ENCODE measurements at regions of chr20 and their contacts with region 1.

Region 1: DNA sequence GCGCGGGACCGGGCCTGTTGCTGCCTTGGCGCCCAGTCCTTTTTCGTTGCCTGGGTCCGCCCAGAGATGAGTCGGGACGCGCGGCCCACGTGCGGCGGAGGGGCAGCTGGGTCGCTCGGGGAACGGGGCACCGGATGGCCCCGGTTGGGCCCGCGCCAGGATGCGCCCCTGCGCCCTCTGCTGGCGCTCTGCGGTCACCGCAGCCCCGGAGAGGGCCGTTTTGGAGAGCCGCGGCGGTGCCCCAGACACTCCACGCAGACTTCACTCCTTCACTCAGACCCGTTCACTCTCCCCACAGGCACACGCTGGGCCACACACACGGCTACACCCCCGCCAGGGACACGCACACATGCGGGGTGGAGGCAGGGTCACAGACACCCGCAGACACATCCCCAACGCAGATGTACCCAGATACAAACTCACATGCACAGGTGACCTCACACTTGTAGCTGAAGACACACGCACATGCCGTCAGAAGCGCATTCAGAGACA is 38.8 kb downstream of the SRC start:
- DNase-seq: peak; percentile 73 to 81 (median 80)
- H3K4me3 ChIP-seq: peak overlapping the region; percentile 20 to 68 (median 24)
- H3K4me3 Mint-ChIP-seq: peak overlapping the region; percentile 66 to 84
- H3K27ac ChIP-seq: peak overlapping the region in 1 of 2 donors; percentile 78
- H3K27ac Mint-ChIP-seq: peak overlapping the region in 5 of 7 donors; percentile 51 to 89 (median 72)
- H3K4me1 ChIP-seq: peaks cover 35 to 44% of the 10 kb centered on the region in 2 donors
- H3K4me1 Mint-ChIP-seq: peaks cover 40% of the 10 kb centered on the region
- H3K27me3 ChIP-seq: no peaks in the 10 kb centered on the region
- H3K27me3 Mint-ChIP-seq: peaks cover 9 to 18% (median 12%) of the 10 kb centered on the region in 3 donors
- CTCF ChIP-seq: peak; percentile 93

Region 2: GRCh38 chr20:37192137-37192854 is 192.4 kb before region 1 on chr20:
- intact Hi-C with region 1: loop called in 1 of 2 experiments (anchors 2 kb)
- DNase-seq: peak; percentile 38 to 62 (median 59)
- H3K4me3 ChIP-seq: no peak overlapping the region
- H3K4me3 Mint-ChIP-seq: no peak overlapping the region
- H3K27ac ChIP-seq: peak overlapping the region in 1 of 2 donors; percentile 31
- H3K27ac Mint-ChIP-seq: peak overlapping the region in 2 of 7 donors; percentile 22 to 63
- H3K4me1 ChIP-seq: no peaks in the 10 kb centered on the region
- H3K4me1 Mint-ChIP-seq: peaks cover 36% of the 10 kb centered on the region
- H3K27me3 ChIP-seq: no peaks in the 10 kb centered on the region
- H3K27me3 Mint-ChIP-seq: no peaks in the 10 kb centered on the region
- CTCF ChIP-seq: peak; percentile 96

Region 3: GRCh38 chr20:37265152-37265551 is 119.6 kb before region 1 on chr20:
- intact Hi-C with region 1: loop called (anchors 1 to 2 kb)
- DNase-seq: peak; percentile 84 to 91 (median 90)
- H3K4me3 ChIP-seq: no peak overlapping the region
- H3K4me3 Mint-ChIP-seq: no peak overlapping the region
- H3K27ac ChIP-seq: peak overlapping the region; percentile 53 to 81
- H3K27ac Mint-ChIP-seq: peak overlapping the region; percentile 37 to 89 (median 78)
- H3K4me1 ChIP-seq: peaks cover 16% of the 10 kb centered on the region in 2 donors
- H3K4me1 Mint-ChIP-seq: peaks cover 17% of the 10 kb centered on the region
- H3K27me3 ChIP-seq: no peaks in the 10 kb centered on the region
- H3K27me3 Mint-ChIP-seq: peaks cover 1 to 3% (median 2%) of the 10 kb centered on the region in 3 donors
- CTCF ChIP-seq: no peak

Region 4: DNA sequence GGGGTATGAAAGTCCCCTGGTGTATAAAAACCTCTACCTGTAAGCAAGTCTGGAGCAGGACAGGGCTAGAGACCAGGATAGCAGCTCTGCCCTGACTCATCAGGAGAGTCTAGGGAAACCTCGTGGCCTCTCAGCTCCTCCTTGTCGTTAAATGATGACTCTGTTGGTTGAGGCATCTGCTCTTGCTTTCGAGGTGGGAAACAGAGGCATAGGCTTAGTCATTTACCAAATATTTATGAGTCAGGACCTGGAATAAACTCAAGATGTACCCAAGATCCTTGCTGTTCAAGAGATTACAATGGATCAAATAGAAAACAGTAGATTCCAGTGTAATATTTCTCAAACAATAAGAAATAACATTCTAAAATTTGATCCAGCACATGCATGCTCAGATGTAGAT is 89.7 kb before region 1 on chr20:
- intact Hi-C with region 1: loop called in 1 of 2 experiments (anchors 5 kb)
- DNase-seq: peak; percentile 60 to 88 (median 80)
- H3K4me3 ChIP-seq: peak overlapping the region in 1 of 3 experiments; percentile 42
- H3K4me3 Mint-ChIP-seq: peak overlapping the region; percentile 28 to 63
- H3K27ac ChIP-seq: peak overlapping the region; percentile 90 to 99
- H3K27ac Mint-ChIP-seq: peak overlapping the region; percentile 92 to 99 (median 97)
- H3K4me1 ChIP-seq: peaks cover 67 to 86% of the 10 kb centered on the region in 2 donors
- H3K4me1 Mint-ChIP-seq: peaks cover 78% of the 10 kb centered on the region
- H3K27me3 ChIP-seq: no peaks in the 10 kb centered on the region
- H3K27me3 Mint-ChIP-seq: no peaks in the 10 kb centered on the region
- CTCF ChIP-seq: no peak

Region 5: GRCh38 chr20:37345339-37346230 is 39.1 kb before region 1 on chr20 and contains the start of gene SRC:
- intact Hi-C with region 1: loop called in 1 of 2 experiments (anchors 5 kb)
- DNase-seq: peak; percentile 59 to 72 (median 64)
- H3K4me3 ChIP-seq: peak within 1 kb of the TSS; percentile 48 to 69 (median 57)
- H3K4me3 Mint-ChIP-seq: peak within 1 kb of the TSS; percentile 76 to 80
- H3K27ac ChIP-seq: peak within 1 kb of the TSS in 1 of 2 donors; percentile 69
- H3K27ac Mint-ChIP-seq: peak within 1 kb of the TSS; percentile 40 to 90 (median 79)
- H3K4me1 ChIP-seq: peaks cover 47 to 63% of the 10 kb centered on the region in 2 donors
- H3K4me1 Mint-ChIP-seq: peaks cover 52% of the 10 kb centered on the region
- H3K27me3 ChIP-seq: peaks cover 0 to 9% of the 10 kb centered on the region in 2 donors
- H3K27me3 Mint-ChIP-seq: peaks cover 6 to 23% (median 18%) of the 10 kb centered on the region in 3 donors
- CTCF ChIP-seq: no peak
- polyA plus RNA-seq, gene SRC: 4.9 to 55.1 (median 6.8) TPM

Region 6: GRCh38 chr20:37396416-37397075 is 11.8 kb after region 1 on chr20:
- intact Hi-C with region 1: no loop called
- DNase-seq: no peak
- H3K4me3 ChIP-seq: no peak overlapping the region
- H3K4me3 Mint-ChIP-seq: no peak overlapping the region
- H3K27ac ChIP-seq: no peak overlapping the region
- H3K27ac Mint-ChIP-seq: peak overlapping the region in 1 of 7 donors; percentile 18
- H3K4me1 ChIP-seq: peaks cover 10 to 20% of the 10 kb centered on the region in 2 donors
- H3K4me1 Mint-ChIP-seq: peaks cover 14% of the 10 kb centered on the region
- H3K27me3 ChIP-seq: no peaks in the 10 kb centered on the region
- H3K27me3 Mint-ChIP-seq: peaks cover 0 to 4% (median 2%) of the 10 kb centered on the region in 3 donors
- CTCF ChIP-seq: no peak

Region 7: GRCh38 chr20:37411408-37412219 is 26.9 kb after region 1 on chr20:
- intact Hi-C with region 1: no loop called
- DNase-seq: no peak
- H3K4me3 ChIP-seq: peak overlapping the region; percentile 37 to 74 (median 44)
- H3K4me3 Mint-ChIP-seq: no peak overlapping the region
- H3K27ac ChIP-seq: no peak overlapping the region
- H3K27ac Mint-ChIP-seq: no peak overlapping the region
- H3K4me1 ChIP-seq: peaks cover 21 to 30% of the 10 kb centered on the region in 2 donors
- H3K4me1 Mint-ChIP-seq: peaks cover 11% of the 10 kb centered on the region
- H3K27me3 ChIP-seq: peaks cover 0 to 13% of the 10 kb centered on the region in 2 donors
- H3K27me3 Mint-ChIP-seq: peaks cover 13 to 28% (median 13%) of the 10 kb centered on the region in 3 donors
- CTCF ChIP-seq: no peak